ENCODE measurements at regions of chrX and their contacts with region 1.

Region 1: DNA sequence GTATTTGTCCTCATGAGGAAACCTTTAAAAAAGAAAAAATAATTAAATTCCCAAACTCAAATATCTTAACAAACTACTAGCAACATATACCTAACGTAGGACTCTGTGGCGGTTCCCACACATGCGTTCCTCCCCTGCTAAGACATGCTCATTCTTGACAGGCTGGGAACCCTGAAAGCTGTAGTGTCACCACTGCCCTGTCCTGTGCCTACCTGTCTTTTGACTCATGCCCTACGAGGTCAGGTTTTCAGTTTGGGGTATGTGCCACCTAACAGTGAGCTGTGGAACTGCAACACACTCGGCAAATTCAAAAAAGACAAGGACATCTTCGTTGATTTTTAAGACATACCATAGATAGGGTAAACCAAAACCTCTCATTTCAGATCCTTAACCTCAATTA is 17.8 kb downstream of the IDS start:
- DNase-seq: no peak
- H3K4me3 ChIP-seq: no peak overlapping the region
- H3K27ac ChIP-seq: no peak overlapping the region
- H3K4me1 ChIP-seq: peaks cover 0 to 3% (median 0%) of the 10 kb centered on the region in 4 donors
- H3K27me3 ChIP-seq: no peaks in the 10 kb centered on the region
- CTCF ChIP-seq: no peak
- EP300 ChIP-seq: no peak
- POLR2A ChIP-seq: no peak

Region 2: GRCh38 chrX:147911192-147912022 is 1575.9 kb before region 1 on chrX and contains the start of gene FMR1:
- in situ Hi-C with region 1: loop called in 1 of 4 experiments (anchors 25 kb)
- intact Hi-C with region 1: no loop called
- DNase-seq: peak; percentile 95
- H3K4me3 ChIP-seq: peak within 1 kb of the TSS; percentile 29 to 78 (median 69)
- H3K27ac ChIP-seq: peak within 1 kb of the TSS; percentile 92 to 97 (median 94)
- H3K4me1 ChIP-seq: peaks cover 0 to 29% (median 5%) of the 10 kb centered on the region in 4 donors
- H3K27me3 ChIP-seq: no peaks in the 10 kb centered on the region
- CTCF ChIP-seq: no peak
- EP300 ChIP-seq: no peak
- POLR2A ChIP-seq: no peak
- total RNA-seq, gene FMR1: 14.9 to 61.8 (median 31.2) TPM

Region 3: GRCh38 chrX:149040873-149041535 is 446.3 kb before region 1 on chrX:
- in situ Hi-C with region 1: no loop called
- intact Hi-C with region 1: no loop called
- DNase-seq: no peak
- H3K4me3 ChIP-seq: no peak overlapping the region
- H3K27ac ChIP-seq: no peak overlapping the region
- H3K4me1 ChIP-seq: no peaks in the 10 kb centered on the region
- H3K27me3 ChIP-seq: no peaks in the 10 kb centered on the region
- CTCF ChIP-seq: no peak
- EP300 ChIP-seq: no peak
- POLR2A ChIP-seq: no peak